B cell (primary cell): ENCODE measurements at regions of chr2 and their contacts with region 1.

Region 1: GRCh38 chr2:136212423-136213378 is 94.8 kb upstream of the CXCR4 start:
- DNase-seq: peak; percentile 81
- ATAC-seq: peak; percentile 74
- H3K4me3 ChIP-seq: no peak overlapping the region
- H3K4me3 Mint-ChIP-seq: peak overlapping the region; percentile 74
- H3K27ac ChIP-seq: peak overlapping the region; percentile 53 to 99
- H3K27ac Mint-ChIP-seq: peak overlapping the region; percentile 81
- H3K4me1 ChIP-seq: peaks cover 80 to 81% of the 10 kb centered on the region in 2 donors
- H3K4me1 Mint-ChIP-seq: peaks cover 96% of the 10 kb centered on the region
- H3K27me3 ChIP-seq: no peaks in the 10 kb centered on the region
- H3K27me3 Mint-ChIP-seq: no peaks in the 10 kb centered on the region
- CTCF ChIP-seq: no peak

Region 2: GRCh38 chr2:136225950-136226835 is 13.5 kb after region 1 on chr2:
- CTCF ChIA-PET with region 1: interaction called, 28 read pairs
- POLR2A ChIA-PET with region 1: interaction called, 41 read pairs
- intact Hi-C with region 1: loop called (anchors 1 kb)
- DNase-seq: peak; percentile 88
- ATAC-seq: peak; percentile 84
- H3K4me3 ChIP-seq: no peak overlapping the region
- H3K4me3 Mint-ChIP-seq: peak overlapping the region; percentile 42
- H3K27ac ChIP-seq: peak overlapping the region; percentile 62 to 75
- H3K27ac Mint-ChIP-seq: peak overlapping the region; percentile 95
- H3K4me1 ChIP-seq: peaks cover 46 to 54% of the 10 kb centered on the region in 2 donors
- H3K4me1 Mint-ChIP-seq: peaks cover 75% of the 10 kb centered on the region
- H3K27me3 ChIP-seq: no peaks in the 10 kb centered on the region
- H3K27me3 Mint-ChIP-seq: no peaks in the 10 kb centered on the region
- CTCF ChIP-seq: no peak